ENCODE measurements at regions of chr1 and their contacts with region 1.

Region 1: GRCh38 chr1:28602536-28603439 is 10.7 kb downstream of the RAB42 start:
- DNase-seq: peak in 1 of 2 experiments; percentile 63
- H3K4me3 ChIP-seq: no peak overlapping the region
- H3K27ac ChIP-seq: no peak overlapping the region; the same call in 1 of the 2 replicates
- H3K4me1 ChIP-seq: 0 out of 7 replicates have a peak, but pooled peaks cover 0 to 2% (median 0%) of the 10 kb centered on the region in 4 experiments
- H3K27me3 ChIP-seq: no peaks in the 10 kb centered on the region
- CTCF ChIP-seq: peak in 2 of 3 experiments; percentile 72; a peak in 3 of 4 replicates
- EP300 ChIP-seq: no peak
- POLR2A ChIP-seq: no peak
- RAD21 ChIP-seq: peak; percentile 89 to 92

Region 2: GRCh38 chr1:28518000-28518744 is 84.6 kb before region 1 on chr1:
- CTCF ChIA-PET with region 1: interaction called, 59 read pairs
- POLR2A ChIA-PET with region 1: interaction called, 301 read pairs
- DNase-seq: peak in 1 of 2 experiments; percentile 98
- H3K4me3 ChIP-seq: peak overlapping the region; percentile 66 to 83 (median 78)
- H3K27ac ChIP-seq: peak overlapping the region; percentile 95
- H3K4me1 ChIP-seq: peaks cover 7 to 16% (median 11%) of the 10 kb centered on the region in 4 experiments
- H3K27me3 ChIP-seq: no peaks in the 10 kb centered on the region
- CTCF ChIP-seq: peak; percentile 73 to 91 (median 88)
- EP300 ChIP-seq: peak in 1 of 2 experiments; percentile 43; a peak in 1 of 3 replicates
- POLR2A ChIP-seq: peak; percentile 82 to 84; a peak in 2 of 3 replicates
- RAD21 ChIP-seq: peak; percentile 75 to 87

Region 3: GRCh38 chr1:28552758-28553663 is 49.8 kb before region 1 on chr1 and contains the start of gene TRNAU1AP:
- CTCF ChIA-PET with region 1: interaction called, 15 read pairs
- POLR2A ChIA-PET with region 1: interaction called, 5 read pairs
- DNase-seq: peak; percentile 82 to 98
- H3K4me3 ChIP-seq: peak within 1 kb of the TSS; percentile 72 to 96 (median 90)
- H3K27ac ChIP-seq: peak within 1 kb of the TSS; percentile 49
- H3K4me1 ChIP-seq: no peaks in the 10 kb centered on the region
- H3K27me3 ChIP-seq: no peaks in the 10 kb centered on the region
- CTCF ChIP-seq: no peak
- EP300 ChIP-seq: peak in 1 of 2 experiments; percentile 65; a peak in 1 of 3 replicates
- POLR2A ChIP-seq: no peak; a peak in 1 of 3 replicates
- RAD21 ChIP-seq: peak; percentile 2 to 18; a peak in 1 of 4 replicates
- total RNA-seq, gene TRNAU1AP: 30.8 and 35.2 TPM in 2 replicates

Region 4: DNA sequence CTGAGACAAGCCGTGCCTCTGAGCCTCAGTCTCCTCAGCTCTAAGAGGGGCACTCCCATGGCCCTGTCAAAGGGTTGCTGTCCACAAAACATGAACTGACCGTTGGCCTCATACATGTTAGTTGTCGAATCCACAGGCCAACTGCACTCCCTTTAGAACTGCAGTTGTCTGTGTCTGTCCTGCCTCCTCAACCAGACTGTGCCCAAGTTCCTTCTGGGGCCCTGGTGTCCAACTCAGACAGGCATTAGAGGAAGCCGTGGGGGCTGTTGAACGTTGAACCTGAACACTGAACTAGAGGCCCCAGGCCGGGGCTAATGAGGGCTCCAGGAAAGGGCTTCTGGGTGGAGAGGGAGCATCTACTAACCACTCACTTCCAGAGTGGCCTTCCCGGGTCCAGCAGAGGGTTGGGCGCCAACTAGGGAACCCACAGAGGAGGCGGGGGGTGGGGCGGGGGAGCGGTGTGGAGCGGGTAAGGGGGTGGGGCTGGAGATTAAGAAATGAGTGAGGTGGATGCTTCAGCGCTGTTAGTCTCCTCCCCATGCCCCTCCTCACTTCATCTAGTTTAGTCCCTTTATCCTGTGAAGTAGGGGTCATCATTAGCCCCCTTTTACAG is 11.0 kb before region 1 on chr1 and contains the start of gene RAB42:
- CTCF ChIA-PET with region 1: interaction called, 13 read pairs
- POLR2A ChIA-PET with region 1: interaction called, 4 read pairs
- DNase-seq: peak in 1 of 2 experiments; percentile 76
- H3K4me3 ChIP-seq: peak within 1 kb of the TSS; percentile 40 to 66 (median 56)
- H3K27ac ChIP-seq: no peak within 1 kb of the TSS
- H3K4me1 ChIP-seq: peaks cover 9 to 18% (median 16%) of the 10 kb centered on the region in 4 experiments
- H3K27me3 ChIP-seq: peaks cover 0 to 7% (median 2%) of the 10 kb centered on the region in 4 experiments; a peak in 3 of 7 replicates
- CTCF ChIP-seq: no peak
- EP300 ChIP-seq: no peak
- POLR2A ChIP-seq: no peak
- RAD21 ChIP-seq: no peak
- total RNA-seq, gene RAB42: 12.5 and 13.6 TPM in 2 replicates

Region 5: DNA sequence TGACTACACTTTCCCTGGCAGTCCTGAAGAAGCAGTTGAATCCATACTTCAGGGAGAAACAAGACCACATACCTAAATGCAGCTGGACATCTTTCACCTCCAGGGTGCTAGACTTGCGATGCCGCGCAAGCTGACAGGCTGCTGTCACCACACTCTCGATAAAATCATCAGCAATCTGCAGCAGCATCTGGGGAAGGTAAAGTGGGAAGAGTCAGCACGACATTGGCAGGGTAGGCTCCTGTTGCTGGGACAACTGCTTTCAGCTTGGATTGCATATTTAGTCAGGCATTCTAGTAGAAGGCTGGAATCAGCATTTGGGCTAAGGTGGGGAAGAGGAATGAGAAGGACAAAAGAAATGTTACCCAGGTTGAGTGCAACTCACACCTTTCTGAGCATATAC is 10.4 kb after region 1 on chr1:
- CTCF ChIA-PET with region 1: interaction called, 19 read pairs
- POLR2A ChIA-PET with region 1: interaction called, 3 read pairs
- DNase-seq: no peak
- H3K4me3 ChIP-seq: no peak overlapping the region
- H3K27ac ChIP-seq: no peak overlapping the region
- H3K4me1 ChIP-seq: no peaks in the 10 kb centered on the region
- H3K27me3 ChIP-seq: no peaks in the 10 kb centered on the region
- CTCF ChIP-seq: no peak
- EP300 ChIP-seq: no peak
- POLR2A ChIP-seq: no peak
- RAD21 ChIP-seq: no peak

Region 6: GRCh38 chr1:28775121-28775944 is 172.5 kb after region 1 on chr1:
- CTCF ChIA-PET with region 1: no interaction called
- POLR2A ChIA-PET with region 1: no interaction called
- DNase-seq: peak in 1 of 2 experiments; percentile 67
- H3K4me3 ChIP-seq: no peak overlapping the region
- H3K27ac ChIP-seq: no peak overlapping the region
- H3K4me1 ChIP-seq: no peaks in the 10 kb centered on the region
- H3K27me3 ChIP-seq: no peaks in the 10 kb centered on the region
- CTCF ChIP-seq: no peak
- EP300 ChIP-seq: no peak
- POLR2A ChIP-seq: no peak
- RAD21 ChIP-seq: no peak